ENCODE measurements at regions of chrX and their contacts with region 1.

Region 1: GRCh38 chrX:155094468-155095061 is 23.3 kb downstream of the BRCC3 start:
- DNase-seq: no peak
- ATAC-seq: peak; percentile 43 to 55

Region 2: DNA sequence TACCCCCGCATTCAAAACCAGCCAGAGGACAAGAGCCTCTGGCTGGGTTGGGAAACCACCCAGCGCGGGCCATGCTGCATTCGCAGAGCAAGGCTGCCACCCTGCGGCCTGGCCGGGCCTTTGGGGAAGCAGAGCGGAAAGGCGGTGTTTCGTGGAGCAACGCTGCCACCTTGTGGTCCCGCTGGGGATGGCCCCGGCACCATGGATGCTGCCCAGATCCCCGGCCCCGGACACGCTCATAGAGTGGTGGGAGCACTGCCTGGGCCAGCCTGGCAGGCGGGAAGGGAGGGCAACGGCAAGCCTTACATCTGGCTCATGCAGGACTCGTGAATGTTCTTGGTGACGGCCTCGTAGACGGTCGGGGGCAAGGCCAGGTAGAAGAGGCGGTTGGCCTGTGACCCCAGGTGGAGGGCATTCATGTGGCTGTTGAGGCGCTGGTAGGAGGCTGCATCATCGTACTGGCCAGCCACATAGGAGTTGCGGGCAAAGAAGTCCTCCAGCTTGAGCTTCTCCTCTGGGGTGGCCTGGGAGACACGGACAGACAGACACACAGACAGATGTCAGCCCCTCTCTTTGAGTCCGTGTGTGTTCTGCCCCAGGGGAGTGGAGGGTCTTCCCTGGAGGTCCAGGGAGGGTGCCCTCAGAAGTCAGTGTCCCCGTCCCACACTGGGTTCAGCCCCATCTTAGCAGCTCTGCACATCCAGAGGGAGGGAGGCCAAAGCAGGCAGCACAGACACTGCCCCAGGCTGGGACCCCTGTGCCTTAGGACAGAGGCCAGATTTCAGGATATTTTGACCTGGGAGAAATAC is 559.5 kb before region 1 on chrX:
- intact Hi-C with region 1: no loop called
- DNase-seq: peak; percentile 93
- ATAC-seq: peak; percentile 90 to 91

Region 3: DNA sequence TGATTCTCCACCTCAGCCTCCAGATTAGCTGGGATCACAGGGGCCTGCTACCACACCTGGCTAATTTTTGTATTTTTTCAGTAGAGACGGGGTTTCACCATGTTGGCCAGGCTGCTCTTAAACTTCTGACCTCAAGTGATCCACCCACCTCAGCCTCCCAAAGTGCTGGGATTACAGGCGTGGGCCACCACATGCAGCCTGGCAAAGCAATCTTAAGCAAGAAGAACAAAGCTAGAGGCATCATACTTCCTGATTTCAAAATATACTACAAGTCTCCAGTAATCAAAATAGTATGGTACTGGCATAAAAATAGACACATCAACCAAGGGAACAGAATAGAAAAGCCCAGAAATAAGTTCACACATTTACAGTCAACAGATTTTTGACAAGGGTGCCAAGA is 221.2 kb before region 1 on chrX:
- intact Hi-C with region 1: no loop called
- DNase-seq: no peak
- ATAC-seq: no peak

Region 4: DNA sequence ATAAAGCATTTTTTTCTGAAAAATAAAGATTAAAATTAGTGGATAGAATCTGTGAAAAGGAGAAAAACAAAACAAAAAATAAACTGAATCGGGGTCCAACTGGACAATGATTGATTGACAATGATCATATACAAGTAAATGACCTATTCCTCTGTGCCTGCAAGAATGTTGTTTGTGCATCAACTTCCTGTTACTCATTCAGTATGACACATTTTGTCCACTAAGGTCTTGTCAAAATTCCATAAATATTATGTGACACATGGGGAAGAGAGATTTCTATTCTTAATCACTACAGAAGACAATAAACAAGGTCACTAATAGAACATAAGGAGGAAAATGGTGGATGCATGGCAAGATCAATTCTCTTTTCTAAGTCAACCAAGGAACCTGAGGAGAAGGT is 127.0 kb before region 1 on chrX:
- intact Hi-C with region 1: no loop called
- DNase-seq: no peak
- ATAC-seq: no peak

Region 5: GRCh38 chrX:155819966-155820491 is 725.5 kb after region 1 on chrX:
- intact Hi-C with region 1: loop called in 1 of 2 experiments (anchors 5 kb)
- DNase-seq: peak; percentile 45
- ATAC-seq: peak; percentile 75 to 82